ENCODE measurements at regions of chr3 and their contacts with region 1.

Region 1: GRCh38 chr3:38346587-38347410 is at the start of gene XYLB:
- DNase-seq: peak; percentile 48 to 89 (median 67)
- ATAC-seq: peak; percentile 99
- H3K4me3 ChIP-seq: peak within 1 kb of the TSS; percentile 62
- H3K4me3 Mint-ChIP-seq: peak within 1 kb of the TSS; percentile 71 to 91 (median 83)
- H3K27ac ChIP-seq: peak within 1 kb of the TSS; percentile 61
- H3K27ac Mint-ChIP-seq: peak within 1 kb of the TSS in 3 of 9 donors; percentile 54 to 61 (median 54)
- H3K4me1 ChIP-seq: no peaks in the 10 kb centered on the region
- H3K4me1 Mint-ChIP-seq: peaks cover 2 to 7% (median 5%) of the 10 kb centered on the region in 7 donors
- H3K27me3 ChIP-seq: no peaks in the 10 kb centered on the region
- H3K27me3 Mint-ChIP-seq: peaks cover 0 to 4% (median 0%) of the 10 kb centered on the region in 5 donors
- total RNA-seq, gene XYLB: 1.00 to 6.7 (median 2.1) TPM

Region 2: DNA sequence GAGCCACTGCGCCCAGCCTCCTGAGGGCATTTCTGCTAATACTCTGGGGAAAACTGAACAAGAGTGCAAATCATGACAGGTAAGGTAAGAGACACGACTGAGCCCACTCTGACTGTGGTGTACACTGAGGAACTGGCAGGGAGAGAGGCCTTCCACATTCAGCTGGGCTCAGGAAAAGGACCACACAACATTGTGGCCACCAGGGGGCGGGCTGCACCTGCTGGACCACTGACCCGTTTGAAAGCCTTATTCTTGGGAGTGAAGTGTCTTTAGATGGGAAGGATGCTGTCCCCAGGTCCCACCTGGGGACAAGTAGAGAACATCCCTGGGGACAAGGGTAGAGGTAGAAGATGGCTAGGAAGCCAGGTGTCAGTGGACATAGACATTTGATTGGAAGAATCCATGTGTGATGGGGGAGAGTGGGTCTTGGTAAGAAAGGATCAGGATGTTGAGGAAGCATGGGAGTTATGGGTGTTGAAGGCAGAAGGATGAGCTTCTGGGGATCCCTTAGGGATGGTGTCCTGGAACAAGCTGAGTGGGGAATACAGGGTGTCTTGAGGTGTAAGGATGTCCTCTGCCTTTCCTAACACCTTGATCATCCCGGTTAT is 491.3 kb before region 1 on chr3:
- CTCF ChIA-PET with region 1: no interaction called
- POLR2A ChIA-PET with region 1: no interaction called
- intact Hi-C with region 1: loop called in 1 of 2 experiments (anchors 5 kb)
- DNase-seq: peak; percentile 53 to 82 (median 67)
- ATAC-seq: peak; percentile 59
- H3K4me3 ChIP-seq: no peak overlapping the region
- H3K4me3 Mint-ChIP-seq: no peak overlapping the region
- H3K27ac ChIP-seq: no peak overlapping the region
- H3K27ac Mint-ChIP-seq: peak overlapping the region in 3 of 9 donors; percentile 16 to 83 (median 42)
- H3K4me1 ChIP-seq: peaks cover 0 to 7% of the 10 kb centered on the region in 2 donors
- H3K4me1 Mint-ChIP-seq: peaks cover 2 to 12% (median 6%) of the 10 kb centered on the region in 7 donors
- H3K27me3 ChIP-seq: no peaks in the 10 kb centered on the region
- H3K27me3 Mint-ChIP-seq: peaks cover 0 to 4% (median 0%) of the 10 kb centered on the region in 5 donors

Measured in naive thymus-derived CD4-positive, alpha-beta T cell (primary cell).